CD8-positive, alpha-beta memory T cell (primary cell): ENCODE measurements at regions of chr7 and their contacts with region 1.

Region 1: GRCh38 chr7:12524794-12525386 is 45.6 kb upstream of the SCIN start:
- DNase-seq: peak in 2 of 5 donors; percentile 7 to 9
- H3K4me3 ChIP-seq: no peak overlapping the region
- H3K4me3 Mint-ChIP-seq: no peak overlapping the region
- H3K27ac ChIP-seq: no peak overlapping the region
- H3K27ac Mint-ChIP-seq: no peak overlapping the region
- H3K4me1 ChIP-seq: no peaks in the 10 kb centered on the region
- H3K4me1 Mint-ChIP-seq: peaks cover 0 to 4% (median 0%) of the 10 kb centered on the region in 3 donors
- H3K27me3 ChIP-seq: no peaks in the 10 kb centered on the region
- H3K27me3 Mint-ChIP-seq: peaks cover 0 to 39% of the 10 kb centered on the region in 2 donors

Region 2: DNA sequence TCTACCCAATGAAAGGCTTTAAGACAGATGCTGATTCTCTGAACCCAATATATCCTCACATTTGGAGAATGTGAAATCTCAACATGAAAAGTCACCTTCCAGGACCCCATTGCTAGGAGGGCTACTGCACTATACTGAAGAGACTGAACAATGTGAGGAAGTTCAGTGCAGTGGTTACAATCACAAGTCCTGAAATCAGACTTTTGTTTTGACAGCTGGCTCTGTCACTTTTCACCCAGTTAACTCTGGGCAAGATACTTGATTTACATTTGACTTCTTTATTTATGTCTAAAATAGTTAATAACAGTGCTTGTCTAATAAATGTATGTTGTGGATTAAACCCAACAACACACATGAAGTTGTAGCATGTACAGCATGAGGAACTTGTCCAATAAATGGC is 106.4 kb before region 1 on chr7:
- CTCF ChIA-PET with region 1: no interaction called
- POLR2A ChIA-PET with region 1: no interaction called
- DNase-seq: no peak
- H3K4me3 ChIP-seq: no peak overlapping the region
- H3K4me3 Mint-ChIP-seq: no peak overlapping the region
- H3K27ac ChIP-seq: no peak overlapping the region
- H3K27ac Mint-ChIP-seq: no peak overlapping the region
- H3K4me1 ChIP-seq: no peaks in the 10 kb centered on the region
- H3K4me1 Mint-ChIP-seq: no peaks in the 10 kb centered on the region
- H3K27me3 ChIP-seq: no peaks in the 10 kb centered on the region
- H3K27me3 Mint-ChIP-seq: no peaks in the 10 kb centered on the region

Region 3: GRCh38 chr7:13262929-13263530 is 738.1 kb after region 1 on chr7:
- CTCF ChIA-PET with region 1: interaction called, 16 read pairs
- POLR2A ChIA-PET with region 1: no interaction called
- DNase-seq: peak in 2 of 5 donors; percentile 22 to 27
- H3K4me3 ChIP-seq: no peak overlapping the region
- H3K4me3 Mint-ChIP-seq: no peak overlapping the region
- H3K27ac ChIP-seq: no peak overlapping the region
- H3K27ac Mint-ChIP-seq: no peak overlapping the region
- H3K4me1 ChIP-seq: no peaks in the 10 kb centered on the region
- H3K4me1 Mint-ChIP-seq: no peaks in the 10 kb centered on the region
- H3K27me3 ChIP-seq: no peaks in the 10 kb centered on the region
- H3K27me3 Mint-ChIP-seq: peaks cover 6 to 14% of the 10 kb centered on the region in 2 donors